GM23248 (cell line): ENCODE measurements at regions of chr12 and their contacts with region 1.

Region 1: GRCh38 chr12:28172434-28173030 is 17.7 kb upstream of the CCDC91 start:
- DNase-seq: peak; percentile 86
- H3K4me3 ChIP-seq: no peak overlapping the region
- H3K27ac ChIP-seq: 0 out of 2 replicates have a peak overlapping the region, but pooled peaks have one; percentile 7
- H3K4me1 ChIP-seq: peaks cover 16% of the 10 kb centered on the region
- H3K27me3 ChIP-seq: no peaks in the 10 kb centered on the region

Region 2: DNA sequence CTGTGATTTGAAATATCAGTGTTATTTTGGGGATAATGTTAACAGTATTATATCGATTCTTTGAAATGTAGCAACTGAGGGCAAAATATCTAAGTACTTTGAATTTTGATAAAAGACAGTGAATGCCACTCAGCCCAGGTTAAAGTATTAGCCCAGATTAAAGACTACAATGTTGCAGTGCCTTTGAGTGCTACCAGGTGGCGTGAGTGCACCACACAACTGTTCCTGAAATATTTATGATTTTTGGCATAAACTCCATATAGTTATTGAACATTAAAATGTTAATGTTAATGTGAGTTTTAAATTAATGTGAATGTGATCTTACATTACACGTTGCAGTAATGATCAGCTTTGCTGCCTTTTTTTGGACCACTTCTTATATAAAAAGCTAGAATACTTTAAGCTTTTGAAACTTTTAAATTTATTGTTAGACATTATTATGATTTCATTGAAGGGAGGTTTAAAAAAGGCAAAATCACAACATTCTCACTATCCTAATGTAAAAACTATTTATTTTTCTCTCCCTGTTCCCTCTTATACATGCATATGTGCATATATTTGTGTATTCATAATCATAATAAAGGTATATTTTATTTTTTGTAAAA is 439.4 kb before region 1 on chr12:
- in situ Hi-C with region 1: loop called (anchors 10 kb)
- DNase-seq: peak; percentile 66
- H3K4me3 ChIP-seq: no peak overlapping the region
- H3K27ac ChIP-seq: no peak overlapping the region
- H3K4me1 ChIP-seq: peaks cover 9% of the 10 kb centered on the region; the same call in 1 of the 2 replicates
- H3K27me3 ChIP-seq: no peaks in the 10 kb centered on the region

Region 3: GRCh38 chr12:27975244-27976136 is 197.0 kb before region 1 on chr12:
- in situ Hi-C with region 1: loop called (anchors 25 kb)
- DNase-seq: peak; percentile 77
- H3K4me3 ChIP-seq: peak overlapping the region; percentile 59
- H3K27ac ChIP-seq: no peak overlapping the region
- H3K4me1 ChIP-seq: peaks cover 17% of the 10 kb centered on the region
- H3K27me3 ChIP-seq: no peaks in the 10 kb centered on the region

Region 4: DNA sequence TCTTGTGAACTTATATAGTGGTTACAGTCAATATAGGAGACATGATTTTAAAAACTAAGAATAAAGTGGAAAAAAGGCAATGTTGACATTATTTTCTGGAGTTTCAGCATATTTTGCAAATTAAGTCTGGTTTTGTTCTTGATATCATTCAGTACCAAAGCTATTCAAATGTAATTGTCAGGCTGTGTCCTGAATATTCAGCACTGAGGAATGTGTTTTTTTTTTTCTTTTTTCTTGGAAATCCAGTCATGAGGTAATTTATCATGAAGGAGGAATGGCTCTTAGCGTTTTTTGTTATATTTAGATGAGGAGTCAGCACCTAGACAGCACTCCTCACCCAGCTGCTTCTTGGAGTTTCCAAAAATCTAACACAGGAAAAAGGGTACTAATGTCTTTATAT is 243.2 kb after region 1 on chr12:
- in situ Hi-C with region 1: no loop called
- DNase-seq: peak; percentile 89
- H3K4me3 ChIP-seq: no peak overlapping the region
- H3K27ac ChIP-seq: peak overlapping the region; percentile 19; the same call in 1 of the 2 replicates
- H3K4me1 ChIP-seq: peaks cover 21% of the 10 kb centered on the region
- H3K27me3 ChIP-seq: no peaks in the 10 kb centered on the region